Activated naive CD8-positive, alpha-beta T cell treated with anti-CD3 and anti-CD28 coated beads, Interleukin-2, amount 10 ng/mL, durations not matched to agents 7 days and 5 days (primary cell): ENCODE measurements at regions of chr1 and their contacts with region 1.

Region 1: DNA sequence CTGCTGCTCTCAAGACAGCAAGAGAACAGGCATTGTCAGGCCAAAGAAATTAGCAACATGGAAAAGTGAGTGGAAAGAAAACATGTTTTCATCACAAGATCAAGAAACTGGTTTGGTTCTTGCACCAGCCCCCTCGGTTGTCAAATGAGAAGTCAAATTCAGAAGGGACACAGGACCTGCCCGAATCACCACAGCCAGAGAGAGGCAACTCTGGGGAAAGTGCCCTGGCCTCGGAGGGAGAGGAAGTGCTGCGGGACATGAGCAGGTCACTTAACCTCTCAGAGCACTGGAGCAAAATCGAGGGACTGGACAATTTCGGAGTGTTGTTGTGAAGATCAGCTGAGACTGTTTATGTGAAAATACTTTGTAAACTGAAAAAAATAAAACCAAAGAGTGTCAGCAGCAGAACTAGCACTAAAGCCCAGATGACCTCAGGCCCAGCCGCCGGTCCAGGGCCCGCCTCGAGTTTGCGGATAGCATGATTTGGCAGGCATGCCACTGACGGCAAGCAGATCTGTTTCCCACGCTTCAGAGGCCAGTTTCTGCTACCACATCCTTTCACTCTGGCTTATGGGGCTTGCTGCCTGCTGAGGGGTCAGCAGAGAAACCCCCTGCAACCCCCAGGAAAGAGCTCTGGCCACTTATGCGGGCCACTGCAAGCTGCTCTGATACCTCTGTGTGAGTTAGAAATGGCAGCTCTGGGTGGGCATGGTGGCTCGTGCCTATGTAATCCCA is 32.1 kb downstream of the CD247 start:
- DNase-seq: no peak
- ATAC-seq: no peak
- H3K4me3 Mint-ChIP-seq: peak overlapping the region; percentile 79
- H3K27ac Mint-ChIP-seq: peak overlapping the region; percentile 90
- H3K4me1 Mint-ChIP-seq: peaks cover 86% of the 10 kb centered on the region
- H3K27me3 Mint-ChIP-seq: no peaks in the 10 kb centered on the region

Region 2: DNA sequence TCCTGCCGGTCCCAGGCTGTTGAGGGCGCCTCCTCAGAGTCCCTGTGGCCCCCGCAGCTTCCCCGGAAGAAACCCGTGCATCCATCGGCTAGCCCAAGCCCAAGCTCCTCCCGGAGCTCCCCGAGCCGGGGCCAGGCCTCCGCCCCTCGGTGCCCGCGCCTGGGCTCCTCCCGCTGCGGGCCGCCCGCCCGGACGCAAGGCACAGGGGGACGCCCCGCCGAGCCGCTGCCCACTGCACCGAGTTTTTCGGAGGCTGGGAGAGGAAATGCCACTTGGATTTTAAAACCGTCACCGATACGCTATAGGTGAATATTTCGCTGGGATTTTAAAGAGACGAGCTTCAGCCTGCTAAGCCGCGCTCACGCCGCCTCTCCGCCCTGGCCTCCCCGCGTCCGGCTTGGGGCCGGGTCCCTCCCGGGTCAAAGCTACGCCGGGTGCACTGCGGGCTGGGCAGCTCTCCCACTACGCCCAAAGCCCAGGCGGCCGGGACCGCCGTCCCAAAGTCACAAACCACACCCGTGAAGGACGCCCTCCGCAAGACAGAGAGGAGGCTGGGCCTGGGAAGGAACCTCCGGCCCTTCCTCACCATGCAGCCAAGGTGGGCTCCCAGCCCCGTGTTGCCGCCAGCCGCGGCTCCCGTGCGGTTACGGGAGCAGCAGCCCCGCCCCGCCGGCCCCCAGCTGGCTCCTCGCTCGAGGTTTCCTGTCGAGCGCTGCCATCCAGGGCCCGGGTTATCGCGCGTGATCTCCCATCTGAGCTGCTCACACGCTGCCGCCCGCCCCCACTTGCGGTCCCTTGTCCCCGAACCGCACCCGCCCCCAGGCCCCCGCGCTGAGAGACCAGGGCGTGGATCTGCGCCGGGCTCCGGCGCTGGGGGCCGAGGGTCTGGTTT is 31.1 kb before region 1 on chr1:
- POLR2A ChIA-PET with region 1: interaction called, 16 read pairs
- DNase-seq: peak; percentile 84
- ATAC-seq: peak; percentile 67
- H3K4me3 Mint-ChIP-seq: peak overlapping the region; percentile 78
- H3K27ac Mint-ChIP-seq: peak overlapping the region; percentile 80
- H3K4me1 Mint-ChIP-seq: peaks cover 47% of the 10 kb centered on the region
- H3K27me3 Mint-ChIP-seq: no peaks in the 10 kb centered on the region

Region 3: DNA sequence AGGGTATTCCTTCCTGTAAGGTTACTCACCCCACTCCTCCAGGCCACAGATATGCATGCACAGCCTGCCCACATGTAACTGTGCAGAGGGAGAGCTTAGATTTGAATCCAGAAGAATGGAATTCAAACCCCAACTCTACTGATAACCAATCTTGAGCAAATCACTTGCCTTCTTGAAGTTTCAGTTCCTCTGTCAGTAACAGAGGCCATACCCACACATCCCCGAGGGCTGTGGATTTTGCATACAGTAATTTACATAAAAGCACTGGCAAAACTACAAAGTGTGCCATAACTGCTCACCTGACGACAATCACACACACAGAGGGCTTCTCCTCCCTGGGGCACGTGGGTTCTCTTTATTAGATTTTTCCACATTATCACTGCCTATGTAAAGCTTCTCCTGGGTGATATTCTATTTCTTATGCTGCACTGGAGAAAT is 13.4 kb after region 1 on chr1:
- POLR2A ChIA-PET with region 1: interaction called, 18 read pairs
- DNase-seq: no peak
- ATAC-seq: peak; percentile 64
- H3K4me3 Mint-ChIP-seq: peak overlapping the region; percentile 75
- H3K27ac Mint-ChIP-seq: peak overlapping the region; percentile 88
- H3K4me1 Mint-ChIP-seq: peaks cover 86% of the 10 kb centered on the region
- H3K27me3 Mint-ChIP-seq: no peaks in the 10 kb centered on the region